ENCODE measurements at regions of chr18 and their contacts with region 1.

Region 1: GRCh38 chr18:57480724-57481123 is 45.5 kb downstream of the ONECUT2 start:
- DNase-seq: no peak
- ATAC-seq: no peak
- H3K4me3 Mint-ChIP-seq: no peak overlapping the region
- H3K27ac Mint-ChIP-seq: no peak overlapping the region
- H3K4me1 Mint-ChIP-seq: no peaks in the 10 kb centered on the region
- H3K27me3 Mint-ChIP-seq: peaks cover 16% of the 10 kb centered on the region

Region 2: GRCh38 chr18:56901919-56902318 is 578.8 kb before region 1 on chr18:
- CTCF ChIA-PET with region 1: no interaction called
- POLR2A ChIA-PET with region 1: interaction called, 10 read pairs
- intact Hi-C with region 1: no loop called
- DNase-seq: no peak
- ATAC-seq: no peak
- H3K4me3 Mint-ChIP-seq: no peak overlapping the region
- H3K27ac Mint-ChIP-seq: no peak overlapping the region
- H3K4me1 Mint-ChIP-seq: peaks cover 10% of the 10 kb centered on the region
- H3K27me3 Mint-ChIP-seq: no peaks in the 10 kb centered on the region

Region 3: DNA sequence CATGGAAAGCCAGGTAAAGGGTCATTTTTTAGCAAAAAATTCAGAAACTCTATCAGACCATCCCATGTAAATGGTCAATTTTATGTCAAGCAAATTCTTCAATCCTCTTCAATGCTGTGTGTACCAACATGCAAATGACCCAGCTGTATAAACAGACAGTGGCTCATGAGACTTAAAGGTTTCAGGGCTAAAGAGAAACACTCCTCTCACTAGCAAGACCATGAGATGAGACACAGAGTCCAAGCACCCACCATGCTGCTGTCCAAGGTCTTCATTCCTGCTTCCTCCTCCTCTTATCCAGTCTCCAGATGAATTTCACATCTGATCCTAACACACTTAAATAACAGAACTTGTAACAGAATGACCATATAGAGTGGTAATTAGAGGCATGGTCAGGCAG is 76.4 kb before region 1 on chr18:
- CTCF ChIA-PET with region 1: no interaction called
- POLR2A ChIA-PET with region 1: no interaction called
- intact Hi-C with region 1: no loop called
- DNase-seq: no peak
- ATAC-seq: no peak
- H3K4me3 Mint-ChIP-seq: no peak overlapping the region
- H3K27ac Mint-ChIP-seq: no peak overlapping the region
- H3K4me1 Mint-ChIP-seq: no peaks in the 10 kb centered on the region
- H3K27me3 Mint-ChIP-seq: peaks cover 17% of the 10 kb centered on the region

Region 4: GRCh38 chr18:59323931-59324622 is 1843.4 kb after region 1 on chr18:
- CTCF ChIA-PET with region 1: no interaction called
- POLR2A ChIA-PET with region 1: no interaction called
- intact Hi-C with region 1: no loop called
- DNase-seq: no peak
- ATAC-seq: no peak
- H3K4me3 Mint-ChIP-seq: no peak overlapping the region
- H3K27ac Mint-ChIP-seq: no peak overlapping the region
- H3K4me1 Mint-ChIP-seq: no peaks in the 10 kb centered on the region
- H3K27me3 Mint-ChIP-seq: peaks cover 2% of the 10 kb centered on the region

Measured in activated CD4-positive, alpha-beta T cell treated with anti-CD3 and anti-CD28 coated beads for 36 hours (primary cell).